Naive thymus-derived CD4-positive, alpha-beta T cell (primary cell): ENCODE measurements at regions of chr10 and their contacts with region 1.

Region 1: DNA sequence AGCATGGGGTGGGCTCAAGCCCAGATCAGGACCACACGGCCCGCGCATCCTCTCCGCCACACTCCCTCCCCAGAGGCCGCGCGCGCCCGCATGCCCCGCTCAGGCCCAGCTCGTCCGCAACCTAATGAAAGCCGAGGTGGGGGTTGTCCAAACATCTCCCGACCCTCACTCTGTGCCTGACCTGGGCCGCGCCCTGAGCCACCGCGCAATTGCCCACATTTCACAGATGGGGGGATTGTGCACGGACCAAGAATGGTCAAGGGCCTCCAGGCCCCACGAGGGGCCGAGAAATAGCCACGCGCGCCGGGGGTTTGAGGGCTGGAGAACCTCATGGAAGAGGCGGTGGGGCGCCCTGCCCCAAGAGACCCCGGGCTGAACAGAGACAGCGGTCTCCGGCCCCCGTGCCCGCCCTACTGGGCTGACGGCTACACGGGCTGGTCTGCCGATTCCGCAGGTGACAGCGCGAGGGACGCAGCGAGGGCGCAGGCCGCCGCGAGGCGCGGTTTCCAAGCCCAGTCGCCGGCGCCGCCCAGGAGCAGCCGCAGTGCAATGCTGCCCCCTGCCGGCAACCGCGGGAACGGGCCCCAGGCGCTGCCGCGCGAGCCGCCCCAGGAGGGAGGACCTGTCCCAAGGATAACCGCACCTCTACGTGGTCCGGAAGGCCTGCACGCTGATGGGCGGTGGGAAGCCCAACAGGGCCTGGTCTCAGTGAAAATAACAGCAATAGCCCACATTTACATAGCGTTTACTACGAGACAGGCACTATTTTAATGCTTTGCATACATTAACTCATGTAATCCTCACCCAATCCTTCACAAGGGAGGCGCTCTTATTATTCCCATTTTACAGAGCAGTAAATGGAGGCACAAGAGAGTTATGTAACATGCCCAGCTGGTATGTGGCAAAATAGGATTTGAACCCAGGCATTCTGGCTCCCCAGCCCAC is 10.5 kb upstream of the GRID1 start:
- DNase-seq: peak; percentile 52 to 92 (median 78)
- ATAC-seq: peak; percentile 98
- H3K4me3 ChIP-seq: no peak overlapping the region
- H3K4me3 Mint-ChIP-seq: peak overlapping the region in 5 of 10 donors; percentile 23 to 60 (median 32)
- H3K27ac ChIP-seq: no peak overlapping the region
- H3K27ac Mint-ChIP-seq: peak overlapping the region in 1 of 9 donors; percentile 41
- H3K4me1 ChIP-seq: no peaks in the 10 kb centered on the region
- H3K4me1 Mint-ChIP-seq: peaks cover 0 to 4% (median 0%) of the 10 kb centered on the region in 7 donors
- H3K27me3 ChIP-seq: peaks cover 0 to 5% of the 10 kb centered on the region in 2 donors
- H3K27me3 Mint-ChIP-seq: peaks cover 14 to 54% (median 39%) of the 10 kb centered on the region in 5 donors

Region 2: GRCh38 chr10:84665883-84666463 is 1711.2 kb before region 1 on chr10:
- CTCF ChIA-PET with region 1: no interaction called
- POLR2A ChIA-PET with region 1: no interaction called
- intact Hi-C with region 1: loop called in 1 of 2 experiments (anchors 5 kb)
- DNase-seq: no peak
- ATAC-seq: no peak
- H3K4me3 ChIP-seq: no peak overlapping the region
- H3K4me3 Mint-ChIP-seq: no peak overlapping the region
- H3K27ac ChIP-seq: no peak overlapping the region
- H3K27ac Mint-ChIP-seq: no peak overlapping the region
- H3K4me1 ChIP-seq: no peaks in the 10 kb centered on the region
- H3K4me1 Mint-ChIP-seq: peaks cover 0 to under 1% (median 0%) of the 10 kb centered on the region in 7 donors
- H3K27me3 ChIP-seq: no peaks in the 10 kb centered on the region
- H3K27me3 Mint-ChIP-seq: peaks cover 0 to 21% (median 6%) of the 10 kb centered on the region in 5 donors

Region 3: GRCh38 chr10:84845624-84846261 is 1531.4 kb before region 1 on chr10:
- CTCF ChIA-PET with region 1: no interaction called
- POLR2A ChIA-PET with region 1: no interaction called
- intact Hi-C with region 1: loop called in 1 of 2 experiments (anchors 5 kb)
- DNase-seq: peak in 1 of 9 donors; percentile 0
- ATAC-seq: no peak
- H3K4me3 ChIP-seq: no peak overlapping the region
- H3K4me3 Mint-ChIP-seq: no peak overlapping the region
- H3K27ac ChIP-seq: no peak overlapping the region
- H3K27ac Mint-ChIP-seq: no peak overlapping the region
- H3K4me1 ChIP-seq: no peaks in the 10 kb centered on the region
- H3K4me1 Mint-ChIP-seq: no peaks in the 10 kb centered on the region
- H3K27me3 ChIP-seq: no peaks in the 10 kb centered on the region
- H3K27me3 Mint-ChIP-seq: peaks cover 0 to 8% (median 1%) of the 10 kb centered on the region in 5 donors

Region 4: DNA sequence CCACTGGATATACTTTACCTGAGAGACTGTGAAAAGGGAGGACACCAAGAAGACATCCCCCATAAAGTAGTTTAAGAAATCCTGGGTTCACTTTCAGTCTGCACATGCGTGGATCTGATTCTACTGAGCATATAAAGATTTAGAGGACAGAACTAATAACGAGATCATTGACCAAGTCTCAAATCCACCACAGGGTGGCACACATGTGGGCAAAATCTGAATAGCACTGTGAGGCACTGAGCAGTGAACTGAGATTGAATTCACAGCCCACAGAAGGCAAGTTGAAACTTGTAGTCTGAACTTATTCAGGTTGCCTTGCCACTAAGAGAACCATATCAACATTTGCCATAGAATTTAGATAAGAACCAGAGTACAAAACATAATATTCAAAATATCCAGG is 829.1 kb before region 1 on chr10:
- CTCF ChIA-PET with region 1: no interaction called
- POLR2A ChIA-PET with region 1: no interaction called
- intact Hi-C with region 1: loop called in 1 of 2 experiments (anchors 2 kb)
- DNase-seq: peak in 6 of 9 donors; percentile 20 to 40 (median 34)
- ATAC-seq: peak; percentile 36
- H3K4me3 ChIP-seq: no peak overlapping the region
- H3K4me3 Mint-ChIP-seq: no peak overlapping the region
- H3K27ac ChIP-seq: no peak overlapping the region
- H3K27ac Mint-ChIP-seq: no peak overlapping the region
- H3K4me1 ChIP-seq: no peaks in the 10 kb centered on the region
- H3K4me1 Mint-ChIP-seq: peaks cover 0 to 4% (median 0%) of the 10 kb centered on the region in 7 donors
- H3K27me3 ChIP-seq: no peaks in the 10 kb centered on the region
- H3K27me3 Mint-ChIP-seq: peaks cover 10 to 30% (median 24%) of the 10 kb centered on the region in 5 donors

Region 5: GRCh38 chr10:86100581-86101061 is 276.5 kb before region 1 on chr10:
- CTCF ChIA-PET with region 1: no interaction called
- POLR2A ChIA-PET with region 1: no interaction called
- intact Hi-C with region 1: loop called in 1 of 2 experiments (anchors 5 kb)
- DNase-seq: no peak
- ATAC-seq: peak; percentile 35
- H3K4me3 ChIP-seq: no peak overlapping the region
- H3K4me3 Mint-ChIP-seq: no peak overlapping the region
- H3K27ac ChIP-seq: no peak overlapping the region
- H3K27ac Mint-ChIP-seq: no peak overlapping the region
- H3K4me1 ChIP-seq: no peaks in the 10 kb centered on the region
- H3K4me1 Mint-ChIP-seq: peaks cover 0 to 2% (median 0%) of the 10 kb centered on the region in 7 donors
- H3K27me3 ChIP-seq: no peaks in the 10 kb centered on the region
- H3K27me3 Mint-ChIP-seq: no peaks in the 10 kb centered on the region